Activated T-helper 1 cell treated with anti-CD3 and anti-CD28 coated beads, Interleukin-12 subunit alpha, Interleukin-12 subunit beta, Interleukin-2, Interleukin-4 antibody, amounts not matched to agents 30 ng/mL and 10 ng/mL and 1 ng/mL, durations not matched to agents 14 hours and 24 hours and 36 hours (primary cell): ENCODE measurements at regions of chr11 and their contacts with region 1.

Region 1: DNA sequence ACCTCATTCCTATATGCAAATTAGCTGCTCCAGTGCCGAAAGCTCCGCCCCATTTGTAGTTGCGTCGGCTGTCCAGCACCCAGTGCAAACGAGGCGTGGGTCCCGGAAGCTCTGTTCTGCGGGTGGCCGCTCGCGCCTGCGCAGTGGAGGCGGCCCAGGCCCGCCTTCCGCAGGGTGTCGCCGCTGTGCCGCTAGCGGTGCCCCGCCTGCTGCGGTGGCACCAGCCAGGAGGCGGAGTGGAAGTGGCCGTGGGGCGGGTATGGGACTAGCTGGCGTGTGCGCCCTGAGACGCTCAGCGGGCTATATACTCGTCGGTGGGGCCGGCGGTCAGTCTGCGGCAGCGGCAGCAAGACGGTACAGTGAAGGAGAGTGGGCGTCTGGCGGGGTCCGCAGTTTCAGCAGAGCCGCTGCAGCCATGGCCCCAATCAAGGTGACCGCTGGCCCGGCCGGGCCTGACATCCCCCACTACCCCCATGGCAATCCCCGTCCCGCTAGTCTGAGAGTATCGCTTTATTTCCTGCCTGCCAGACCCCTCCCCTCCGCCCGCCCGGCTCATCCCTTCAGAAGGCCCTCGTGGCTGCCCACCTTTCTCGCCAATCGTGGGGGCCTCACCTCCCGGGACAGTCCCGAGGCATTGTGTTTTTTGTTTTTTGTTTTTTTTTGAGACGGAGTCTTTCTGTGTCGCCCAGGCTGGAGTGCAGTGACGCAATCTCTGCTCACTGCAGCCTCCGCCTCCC is at the start of gene PRDX5:
- DNase-seq: peak; percentile 96
- H3K4me3 Mint-ChIP-seq: peak within 1 kb of the TSS; percentile 94
- H3K27ac Mint-ChIP-seq: peak within 1 kb of the TSS; percentile 100
- H3K4me1 Mint-ChIP-seq: peaks cover 34% of the 10 kb centered on the region
- H3K27me3 Mint-ChIP-seq: no peaks in the 10 kb centered on the region
- total RNA-seq, gene PRDX5: 89.0 and 100 TPM in 2 replicates

Region 2: DNA sequence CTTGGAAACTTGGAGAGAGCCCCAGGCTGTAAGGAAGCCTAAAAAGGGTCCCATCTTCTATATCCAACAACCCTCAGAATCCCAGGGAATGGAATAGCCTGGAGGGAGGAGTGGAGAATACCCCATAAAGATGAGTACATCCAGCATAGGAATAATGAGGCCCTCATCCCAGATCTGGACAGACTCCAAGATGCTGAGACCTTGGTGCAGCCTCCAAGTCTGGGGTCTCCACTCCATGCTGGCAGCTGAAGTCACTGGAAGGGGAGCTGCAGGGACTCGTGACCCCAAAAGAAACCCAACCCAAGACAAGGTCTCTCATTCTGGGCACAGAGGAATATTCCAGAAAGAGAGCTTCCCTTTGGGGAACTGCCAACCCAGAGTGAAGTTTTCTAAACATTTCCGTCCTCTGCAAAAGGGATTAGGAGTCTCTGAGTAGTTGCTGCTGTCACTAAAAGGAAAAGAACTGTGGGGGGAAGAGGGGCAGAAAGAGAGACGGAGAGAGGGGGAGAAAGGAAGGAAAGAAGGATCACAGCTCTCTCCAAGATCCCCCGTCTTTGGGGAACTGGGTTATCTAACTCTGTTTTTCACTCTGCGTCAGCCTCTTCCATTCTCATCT is 1898.7 kb before region 1 on chr11:
- intact Hi-C with region 1: no loop called
- DNase-seq: no peak
- H3K4me3 Mint-ChIP-seq: no peak overlapping the region
- H3K27ac Mint-ChIP-seq: no peak overlapping the region
- H3K4me1 Mint-ChIP-seq: no peaks in the 10 kb centered on the region
- H3K27me3 Mint-ChIP-seq: no peaks in the 10 kb centered on the region

Region 3: GRCh38 chr11:64204464-64204989 is 113.6 kb before region 1 on chr11:
- intact Hi-C with region 1: loop called (anchors 1 kb)
- DNase-seq: peak; percentile 61
- H3K4me3 Mint-ChIP-seq: peak overlapping the region; percentile 78
- H3K27ac Mint-ChIP-seq: peak overlapping the region; percentile 70
- H3K4me1 Mint-ChIP-seq: peaks cover 39% of the 10 kb centered on the region
- H3K27me3 Mint-ChIP-seq: no peaks in the 10 kb centered on the region

Region 4: GRCh38 chr11:64269380-64270234 is 48.5 kb before region 1 on chr11:
- intact Hi-C with region 1: loop called (anchors 1 kb)
- DNase-seq: peak; percentile 98
- H3K4me3 Mint-ChIP-seq: peak overlapping the region; percentile 89
- H3K27ac Mint-ChIP-seq: peak overlapping the region; percentile 97
- H3K4me1 Mint-ChIP-seq: peaks cover 31% of the 10 kb centered on the region
- H3K27me3 Mint-ChIP-seq: no peaks in the 10 kb centered on the region

Region 5: GRCh38 chr11:64331557-64332371 is 13.6 kb after region 1 on chr11:
- intact Hi-C with region 1: loop called (anchors 1 kb)
- DNase-seq: peak; percentile 66
- H3K4me3 Mint-ChIP-seq: peak overlapping the region; percentile 4
- H3K27ac Mint-ChIP-seq: peak overlapping the region; percentile 85
- H3K4me1 Mint-ChIP-seq: peaks cover 16% of the 10 kb centered on the region
- H3K27me3 Mint-ChIP-seq: no peaks in the 10 kb centered on the region

Region 6: DNA sequence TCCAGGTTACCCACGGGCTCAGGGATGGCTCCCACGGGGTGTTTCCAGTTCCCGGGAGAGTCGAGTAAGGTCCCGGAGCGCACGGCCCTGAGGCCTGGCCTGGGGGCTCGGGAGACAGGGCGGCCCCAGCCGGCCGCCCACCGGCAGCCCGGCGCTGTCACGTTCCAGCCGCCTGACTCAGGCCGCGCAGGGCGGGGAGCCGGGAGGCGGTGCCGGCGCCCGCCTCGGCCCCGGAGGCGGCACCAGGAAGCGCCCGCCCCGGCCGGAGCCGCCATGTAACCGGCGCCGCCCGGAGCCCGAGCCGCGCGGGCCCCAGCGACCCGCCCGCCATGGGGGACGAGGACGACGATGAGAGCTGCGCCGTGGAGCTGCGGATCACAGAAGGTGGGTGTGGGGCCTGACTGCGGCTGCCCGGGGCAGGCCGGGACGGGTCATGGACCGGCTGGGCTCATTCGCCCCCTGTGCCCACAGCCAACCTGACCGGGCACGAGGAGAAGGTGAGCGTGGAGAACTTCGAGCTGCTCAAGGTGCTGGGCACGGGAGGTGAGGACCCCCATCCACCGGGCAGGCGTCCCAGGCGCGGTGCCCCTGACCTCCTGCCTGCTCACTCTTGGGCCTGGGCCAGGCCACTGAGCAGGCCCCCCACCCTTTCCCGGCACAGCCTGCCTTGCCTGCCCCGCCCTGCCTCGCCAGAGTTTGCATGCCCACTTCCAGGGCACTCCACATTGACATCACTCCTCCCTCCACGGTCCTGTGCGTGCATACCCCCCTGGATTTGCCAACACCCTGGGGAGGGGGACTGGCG is 41.0 kb after region 1 on chr11 and contains the start of gene RPS6KA4:
- intact Hi-C with region 1: loop called (anchors 1 kb)
- DNase-seq: peak; percentile 52
- H3K4me3 Mint-ChIP-seq: peak within 1 kb of the TSS; percentile 94
- H3K27ac Mint-ChIP-seq: peak within 1 kb of the TSS; percentile 85
- H3K4me1 Mint-ChIP-seq: peaks cover 30% of the 10 kb centered on the region
- H3K27me3 Mint-ChIP-seq: no peaks in the 10 kb centered on the region
- total RNA-seq, gene RPS6KA4: 38.3 and 46.0 TPM in 2 replicates

Region 7: DNA sequence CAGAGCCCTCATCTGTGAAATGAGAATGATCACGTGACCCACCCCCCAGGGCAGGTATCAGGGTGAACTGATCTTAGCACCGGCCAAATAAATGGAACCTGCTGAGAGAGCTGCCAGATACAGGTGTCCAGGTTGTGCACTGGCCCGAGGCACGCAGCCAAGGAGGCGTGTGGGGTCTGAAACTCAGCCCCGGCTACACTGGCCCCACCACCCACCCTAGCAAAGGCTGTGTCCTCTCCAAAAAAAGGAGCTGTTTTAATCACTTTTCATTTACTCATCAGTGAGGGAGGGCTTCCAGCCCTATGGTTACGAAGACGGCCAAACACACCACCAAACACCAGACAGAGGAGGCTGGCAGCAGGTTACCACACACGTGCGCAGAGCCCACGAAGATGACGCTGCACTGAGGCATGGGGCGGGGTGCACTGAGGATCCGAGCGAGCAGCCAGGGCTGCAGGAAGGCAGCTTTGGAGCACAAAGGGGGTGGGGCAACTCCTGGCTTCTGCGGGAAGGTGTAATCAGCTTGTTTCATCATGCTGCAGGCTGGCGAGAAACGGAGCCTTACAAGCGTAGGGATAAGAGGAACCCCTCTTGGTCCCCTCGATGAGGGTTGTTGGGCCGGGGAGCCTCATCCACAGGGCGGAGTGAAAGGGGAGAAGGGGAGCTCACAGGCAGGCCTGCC is 253.4 kb after region 1 on chr11:
- intact Hi-C with region 1: no loop called
- DNase-seq: no peak
- H3K4me3 Mint-ChIP-seq: no peak overlapping the region
- H3K27ac Mint-ChIP-seq: no peak overlapping the region
- H3K4me1 Mint-ChIP-seq: peaks cover 3% of the 10 kb centered on the region
- H3K27me3 Mint-ChIP-seq: peaks cover 9% of the 10 kb centered on the region